CD8-positive, alpha-beta T cell (primary cell): ENCODE measurements at regions of chr12 and their contacts with region 1.

Region 1: DNA sequence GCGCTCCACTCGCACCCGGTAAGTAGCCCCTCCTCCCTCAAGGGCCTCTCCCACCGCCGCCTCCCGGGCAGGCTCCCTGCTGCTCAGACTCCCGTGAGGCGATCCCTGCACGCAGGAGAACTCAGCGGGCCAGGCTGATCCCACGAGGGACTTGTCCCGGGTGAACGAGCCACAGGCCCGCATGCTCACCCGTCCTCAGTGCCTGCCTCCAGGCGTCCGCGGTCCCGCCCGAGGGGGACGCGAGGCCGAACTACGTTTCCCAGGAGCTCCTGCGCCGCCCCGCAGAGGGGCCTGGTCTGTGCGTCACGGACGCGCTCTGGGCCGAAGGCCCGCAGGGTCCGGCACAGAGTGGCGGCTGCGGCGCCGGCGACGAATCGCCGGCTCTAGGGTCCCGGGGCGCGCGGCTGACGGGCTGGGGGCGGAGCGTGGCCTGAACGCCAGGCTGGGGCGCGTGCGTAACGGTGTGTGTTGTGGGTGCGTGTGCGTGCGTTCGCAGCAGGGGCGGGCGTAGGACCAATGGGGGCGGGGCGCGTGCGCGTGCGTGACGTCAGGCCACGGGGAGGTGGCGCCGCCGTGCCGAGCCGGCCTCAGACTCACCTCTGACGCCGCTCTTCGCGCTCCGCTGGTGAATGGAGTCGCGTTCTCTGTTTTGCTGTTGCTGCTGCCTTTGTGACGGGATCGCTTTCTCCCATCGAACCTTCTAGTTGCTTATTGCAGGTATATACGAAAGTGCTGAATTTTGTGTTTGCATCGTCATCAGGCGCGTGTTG is at the starts of genes ZNF10 and ZNF891:
- DNase-seq: peak; percentile 95 to 99 (median 97)
- ATAC-seq: peak; percentile 86
- H3K4me3 ChIP-seq: peak within 1 kb of the TSS; percentile 56 to 63
- H3K4me3 Mint-ChIP-seq: peak within 1 kb of the TSS; percentile 87
- H3K27ac ChIP-seq: peak within 1 kb of the TSS; percentile 90 to 94
- H3K27ac Mint-ChIP-seq: peak within 1 kb of the TSS; percentile 98
- H3K4me1 ChIP-seq: peaks cover 8% of the 10 kb centered on the region
- H3K4me1 Mint-ChIP-seq: peaks cover 27% of the 10 kb centered on the region
- H3K27me3 ChIP-seq: no peaks in the 10 kb centered on the region
- H3K27me3 Mint-ChIP-seq: no peaks in the 10 kb centered on the region
- CTCF ChIP-seq: no peak
- total RNA-seq, gene ZNF10: 63.5 to 65.5 TPM
- total RNA-seq, gene ZNF891: 4.5 to 5.2 TPM

Region 2: GRCh38 chr12:133026996-133027395 is 103.2 kb before region 1 on chr12:
- CTCF ChIA-PET with region 1: no interaction called
- POLR2A ChIA-PET with region 1: no interaction called
- intact Hi-C with region 1: no loop called
- DNase-seq: no peak
- ATAC-seq: no peak
- H3K4me3 ChIP-seq: no peak overlapping the region
- H3K4me3 Mint-ChIP-seq: no peak overlapping the region
- H3K27ac ChIP-seq: no peak overlapping the region
- H3K27ac Mint-ChIP-seq: no peak overlapping the region
- H3K4me1 ChIP-seq: no peaks in the 10 kb centered on the region
- H3K4me1 Mint-ChIP-seq: no peaks in the 10 kb centered on the region
- H3K27me3 ChIP-seq: no peaks in the 10 kb centered on the region
- H3K27me3 Mint-ChIP-seq: no peaks in the 10 kb centered on the region
- CTCF ChIP-seq: no peak

Region 3: DNA sequence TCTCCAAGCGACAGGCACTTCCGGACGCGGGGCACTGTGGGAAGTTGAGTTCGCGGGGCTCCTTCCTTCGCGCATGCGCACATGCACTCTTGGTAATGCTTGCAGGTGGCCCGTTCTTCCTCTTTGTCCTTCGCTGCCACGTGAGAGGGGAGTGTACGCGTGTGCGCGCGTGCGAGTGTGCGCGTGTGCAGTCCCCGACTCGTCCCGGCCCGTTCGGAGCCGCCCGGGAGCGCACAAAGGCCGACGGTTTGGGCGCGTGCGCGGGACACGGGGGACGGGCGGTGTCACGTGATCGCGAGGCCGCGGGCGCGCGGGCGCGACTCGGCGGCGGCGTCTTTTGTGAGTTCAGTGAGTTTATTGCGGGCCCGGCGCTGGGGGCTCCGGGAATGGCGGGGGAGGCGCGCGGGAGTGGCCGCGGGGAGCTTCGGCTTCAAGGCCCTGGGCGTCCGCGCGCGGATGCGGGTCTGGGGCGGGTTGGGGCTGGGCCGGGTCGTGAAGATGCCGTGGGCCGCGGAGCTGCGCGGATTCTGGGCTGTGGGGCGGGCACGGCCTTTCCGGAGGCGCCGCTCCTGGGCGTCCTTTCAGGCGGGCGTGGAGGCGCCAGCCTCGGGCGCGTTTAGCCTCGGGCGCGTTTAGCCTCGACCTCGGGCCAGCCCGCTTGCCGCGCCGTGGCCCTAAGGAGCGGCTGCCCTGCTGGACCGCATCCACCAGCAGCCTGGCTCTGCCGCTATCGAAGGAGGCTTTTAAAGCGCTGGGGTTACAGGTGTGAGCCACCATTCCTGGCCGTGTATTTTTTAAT is 92.8 kb before region 1 on chr12 and contains the start of gene ZNF84:
- CTCF ChIA-PET with region 1: no interaction called
- POLR2A ChIA-PET with region 1: no interaction called
- intact Hi-C with region 1: loop called (anchors 1 kb)
- DNase-seq: peak; percentile 94 to 99 (median 96)
- ATAC-seq: peak; percentile 97
- H3K4me3 ChIP-seq: peak within 1 kb of the TSS; percentile 62 to 69
- H3K4me3 Mint-ChIP-seq: peak within 1 kb of the TSS; percentile 93
- H3K27ac ChIP-seq: peak within 1 kb of the TSS; percentile 78 to 89
- H3K27ac Mint-ChIP-seq: peak within 1 kb of the TSS; percentile 92
- H3K4me1 ChIP-seq: peaks cover 4% of the 10 kb centered on the region
- H3K4me1 Mint-ChIP-seq: peaks cover 20% of the 10 kb centered on the region
- H3K27me3 ChIP-seq: no peaks in the 10 kb centered on the region
- H3K27me3 Mint-ChIP-seq: no peaks in the 10 kb centered on the region
- CTCF ChIP-seq: no peak
- total RNA-seq, gene ZNF84: 26.8 to 27.2 TPM

Region 4: GRCh38 chr12:133080368-133081158 is 49.7 kb before region 1 on chr12 and contains the start of gene ZNF140:
- CTCF ChIA-PET with region 1: no interaction called
- POLR2A ChIA-PET with region 1: interaction called, 20 read pairs
- intact Hi-C with region 1: loop called (anchors 1 kb)
- DNase-seq: peak; percentile 87 to 98 (median 94)
- ATAC-seq: peak; percentile 57
- H3K4me3 ChIP-seq: peak within 1 kb of the TSS; percentile 87 to 92
- H3K4me3 Mint-ChIP-seq: no peak within 1 kb of the TSS
- H3K27ac ChIP-seq: peak within 1 kb of the TSS; percentile 98 to 99
- H3K27ac Mint-ChIP-seq: no peak within 1 kb of the TSS
- H3K4me1 ChIP-seq: peaks cover 15% of the 10 kb centered on the region
- H3K4me1 Mint-ChIP-seq: peaks cover 17% of the 10 kb centered on the region
- H3K27me3 ChIP-seq: no peaks in the 10 kb centered on the region
- H3K27me3 Mint-ChIP-seq: no peaks in the 10 kb centered on the region
- CTCF ChIP-seq: peak; percentile 33
- total RNA-seq, gene ZNF140: 9.1 to 9.4 TPM

Region 5: GRCh38 chr12:133181238-133181959 is 51.2 kb after region 1 on chr12 and contains the start of gene ZNF268:
- CTCF ChIA-PET with region 1: interaction called, 4 read pairs
- POLR2A ChIA-PET with region 1: interaction called, 8 read pairs
- intact Hi-C with region 1: loop called (anchors 1 kb)
- DNase-seq: peak; percentile 78 to 93 (median 89)
- ATAC-seq: peak; percentile 92
- H3K4me3 ChIP-seq: peak within 1 kb of the TSS; percentile 73 to 82
- H3K4me3 Mint-ChIP-seq: peak within 1 kb of the TSS; percentile 93
- H3K27ac ChIP-seq: peak within 1 kb of the TSS; percentile 76 to 79
- H3K27ac Mint-ChIP-seq: peak within 1 kb of the TSS; percentile 92
- H3K4me1 ChIP-seq: peaks cover 8% of the 10 kb centered on the region
- H3K4me1 Mint-ChIP-seq: peaks cover 19% of the 10 kb centered on the region
- H3K27me3 ChIP-seq: no peaks in the 10 kb centered on the region
- H3K27me3 Mint-ChIP-seq: no peaks in the 10 kb centered on the region
- CTCF ChIP-seq: peak; percentile 35
- total RNA-seq, gene ZNF268: 23.9 to 24.8 TPM